Activated naive CD4-positive, alpha-beta T cell treated with anti-CD3 and anti-CD28 coated beads, Interleukin-2, amount 10 ng/mL, durations not matched to agents 7 days and 5 days (primary cell): ENCODE measurements at regions of chr1 and their contacts with region 1.

Region 1: GRCh38 chr1:116514708-116515525 is 55.9 kb downstream of the CD58 start:
- DNase-seq: peak; percentile 74
- H3K4me3 Mint-ChIP-seq: peak overlapping the region; percentile 42
- H3K27ac Mint-ChIP-seq: peak overlapping the region; percentile 93
- H3K4me1 Mint-ChIP-seq: peaks cover 69% of the 10 kb centered on the region
- H3K27me3 Mint-ChIP-seq: no peaks in the 10 kb centered on the region

Region 2: DNA sequence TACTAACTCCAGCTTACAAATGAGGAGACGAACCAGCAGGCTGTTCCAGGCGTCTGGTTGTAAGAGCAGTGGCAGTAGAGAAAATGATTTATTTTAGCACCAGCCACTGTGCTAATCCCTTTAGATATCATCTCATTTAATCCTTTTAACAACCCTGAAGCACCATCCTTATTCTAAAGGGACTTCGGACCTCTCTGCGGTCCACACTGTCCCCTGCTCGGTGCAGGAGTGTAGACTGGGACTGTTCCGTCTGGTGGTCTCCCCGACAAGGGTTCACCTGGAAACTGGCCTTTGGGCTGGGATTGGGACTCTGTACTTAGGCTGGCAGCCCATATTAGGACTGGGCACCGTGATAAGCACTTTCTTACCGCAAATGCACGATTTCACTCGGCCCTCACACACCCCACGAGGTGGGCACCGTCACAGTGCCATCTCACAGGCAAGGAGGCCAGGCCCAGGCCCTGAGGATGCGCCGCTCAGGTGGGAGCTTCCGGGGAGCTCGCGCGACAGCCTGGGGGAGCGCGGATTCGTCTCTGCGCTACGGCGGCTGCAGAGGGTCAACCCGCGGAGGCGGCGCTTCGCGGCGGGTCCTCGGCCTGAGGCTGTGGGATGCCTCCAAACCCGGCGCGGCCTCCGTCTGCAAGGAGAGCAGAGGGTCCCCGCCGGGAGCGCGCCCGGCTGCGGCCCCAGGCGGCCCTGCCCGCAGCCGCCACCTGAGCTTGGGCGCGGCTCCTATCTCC is 96.7 kb before region 1 on chr1:
- CTCF ChIA-PET with region 1: no interaction called
- DNase-seq: peak; percentile 91
- H3K4me3 Mint-ChIP-seq: peak overlapping the region; percentile 88
- H3K27ac Mint-ChIP-seq: peak overlapping the region; percentile 91
- H3K4me1 Mint-ChIP-seq: peaks cover 53% of the 10 kb centered on the region
- H3K27me3 Mint-ChIP-seq: peaks cover 14% of the 10 kb centered on the region

Region 3: DNA sequence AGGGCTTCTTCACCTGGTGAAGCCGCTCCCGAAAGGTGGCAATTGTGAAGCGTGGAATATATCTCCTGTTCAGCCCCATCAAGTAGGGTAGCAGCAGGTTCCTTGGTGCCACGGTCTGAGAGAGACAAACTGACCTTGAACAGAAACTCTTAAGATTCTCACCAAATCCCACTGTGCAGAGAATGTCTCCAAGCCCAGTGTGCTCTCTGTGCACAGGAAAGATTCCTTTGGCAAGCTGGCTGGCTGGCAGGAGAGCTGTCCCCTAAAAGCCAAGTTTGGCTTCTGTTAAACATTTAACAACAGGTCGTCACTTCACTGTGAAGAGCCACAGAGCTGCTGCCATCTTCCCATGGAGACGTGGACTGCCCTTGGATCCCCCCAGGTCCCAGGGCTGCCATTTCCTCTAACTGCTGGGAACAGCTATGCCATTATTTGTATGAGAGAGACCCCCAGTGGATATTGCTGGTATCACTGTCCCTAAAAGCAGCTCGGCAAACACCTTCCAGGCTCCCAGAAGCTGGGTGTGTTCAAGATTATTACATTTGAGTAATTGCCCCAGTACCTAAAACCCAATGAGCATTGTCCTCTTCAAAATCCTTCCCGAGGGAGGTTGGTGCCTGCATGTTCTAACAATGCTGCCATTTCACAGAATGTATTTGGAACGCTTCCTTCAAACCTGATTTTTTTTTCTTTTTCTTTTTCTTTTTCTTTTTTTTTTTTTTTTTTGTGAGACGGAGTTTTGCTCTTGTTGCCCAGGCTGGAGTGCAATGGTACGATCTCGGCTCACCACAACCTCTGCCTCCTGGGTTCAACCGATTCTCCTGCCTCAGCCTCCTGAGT is 15.9 kb before region 1 on chr1:
- CTCF ChIA-PET with region 1: interaction called, 23 read pairs
- DNase-seq: peak; percentile 65
- H3K4me3 Mint-ChIP-seq: no peak overlapping the region
- H3K27ac Mint-ChIP-seq: no peak overlapping the region
- H3K4me1 Mint-ChIP-seq: peaks cover 59% of the 10 kb centered on the region
- H3K27me3 Mint-ChIP-seq: no peaks in the 10 kb centered on the region

Region 4: DNA sequence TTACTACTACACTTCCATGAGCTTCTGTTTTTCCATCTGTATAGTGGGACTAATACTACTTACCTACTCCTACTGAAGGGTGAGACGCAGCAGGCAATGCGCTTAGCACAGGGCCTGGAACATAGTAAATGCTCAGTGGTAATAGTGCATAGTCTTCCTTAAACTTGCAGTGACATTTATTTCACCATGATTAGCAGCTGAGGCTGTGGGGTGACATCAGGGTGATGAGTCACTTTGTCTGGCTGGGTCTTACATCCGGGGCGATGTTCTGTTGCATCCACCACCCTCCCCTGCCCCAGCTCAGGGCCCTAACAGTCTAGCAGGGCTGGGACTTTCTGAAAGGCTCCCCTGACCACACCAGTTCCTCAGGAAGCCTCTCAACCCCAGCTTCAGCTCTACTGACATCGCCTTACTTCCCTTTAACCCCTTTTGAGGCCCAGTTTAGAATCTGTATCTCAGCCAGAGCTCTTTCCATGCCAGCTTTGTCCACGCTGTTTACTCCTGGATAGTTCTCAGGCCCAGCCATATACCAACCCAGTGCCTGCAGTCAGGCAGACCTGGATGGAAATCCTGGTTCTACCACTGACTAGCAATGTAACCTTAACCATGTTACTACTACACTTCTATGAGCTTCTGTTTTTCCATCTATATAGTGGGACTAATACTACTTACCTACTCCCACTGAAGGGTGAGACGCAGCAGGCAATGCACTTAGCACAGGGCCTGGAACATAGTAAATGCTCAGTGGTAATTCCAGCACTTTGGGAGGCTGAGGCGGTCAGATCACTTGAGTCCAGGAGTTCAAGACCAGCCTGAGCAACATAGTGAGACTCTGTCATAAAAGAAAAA is 10.4 kb before region 1 on chr1:
- CTCF ChIA-PET with region 1: interaction called, 23 read pairs
- DNase-seq: peak; percentile 93
- H3K4me3 Mint-ChIP-seq: peak overlapping the region; percentile 39
- H3K27ac Mint-ChIP-seq: peak overlapping the region; percentile 94
- H3K4me1 Mint-ChIP-seq: peaks cover 85% of the 10 kb centered on the region
- H3K27me3 Mint-ChIP-seq: no peaks in the 10 kb centered on the region